HAP-1 (cell line): ENCODE measurements at regions of chr16 and their contacts with region 1.

Region 1: DNA sequence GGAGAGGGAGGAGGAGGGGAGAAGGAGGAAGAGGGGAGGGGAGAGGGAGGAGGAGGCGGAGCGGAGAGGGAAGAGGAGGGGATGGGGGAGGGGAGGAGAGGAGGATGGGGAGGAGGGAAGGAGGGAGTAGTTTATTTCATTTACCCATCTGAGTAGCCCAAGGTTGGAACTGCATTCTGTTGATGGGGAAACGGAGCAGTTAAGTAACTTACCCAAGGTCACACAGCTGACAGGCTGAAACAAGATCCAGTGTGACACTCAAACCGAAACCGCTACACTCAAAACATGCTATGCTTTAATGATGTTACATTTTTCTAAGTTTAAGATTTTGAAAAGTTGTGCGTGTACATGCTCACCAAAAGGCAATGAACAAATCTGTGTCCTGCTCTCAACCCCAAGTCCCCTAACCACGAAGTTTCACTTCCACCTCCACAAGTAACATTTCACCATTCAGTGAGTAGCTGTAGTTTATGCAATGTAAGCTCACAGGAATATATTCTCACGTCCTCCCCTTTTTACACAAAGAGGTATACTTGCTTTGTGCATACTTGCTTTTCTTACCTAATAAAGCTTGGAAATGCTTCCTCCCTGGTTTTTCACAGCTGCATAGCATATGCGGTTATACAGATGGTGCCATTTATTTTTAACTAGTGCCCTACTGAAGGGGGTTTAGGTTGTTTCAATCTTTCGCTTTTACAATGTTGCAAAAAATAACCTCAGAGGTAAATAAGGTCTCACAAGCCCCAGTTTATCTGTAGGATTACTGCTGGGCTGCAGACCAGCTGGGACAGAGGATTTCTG is 275.3 kb downstream of the PARN start:
- DNase-seq: no peak
- H3K4me3 ChIP-seq: no peak overlapping the region
- H3K4me1 ChIP-seq: no peaks in the 10 kb centered on the region
- H3K27me3 ChIP-seq: 0 out of 2 replicates have a peak, but pooled peaks cover 2% of the 10 kb centered on the region

Region 2: GRCh38 chr16:13997933-13998332 is 356.8 kb before region 1 on chr16:
- in situ Hi-C with region 1: no loop called
- DNase-seq: no peak
- H3K4me3 ChIP-seq: no peak overlapping the region
- H3K4me1 ChIP-seq: peaks cover 5% of the 10 kb centered on the region; the same call in 1 of the 2 replicates
- H3K27me3 ChIP-seq: no peaks in the 10 kb centered on the region

Region 3: DNA sequence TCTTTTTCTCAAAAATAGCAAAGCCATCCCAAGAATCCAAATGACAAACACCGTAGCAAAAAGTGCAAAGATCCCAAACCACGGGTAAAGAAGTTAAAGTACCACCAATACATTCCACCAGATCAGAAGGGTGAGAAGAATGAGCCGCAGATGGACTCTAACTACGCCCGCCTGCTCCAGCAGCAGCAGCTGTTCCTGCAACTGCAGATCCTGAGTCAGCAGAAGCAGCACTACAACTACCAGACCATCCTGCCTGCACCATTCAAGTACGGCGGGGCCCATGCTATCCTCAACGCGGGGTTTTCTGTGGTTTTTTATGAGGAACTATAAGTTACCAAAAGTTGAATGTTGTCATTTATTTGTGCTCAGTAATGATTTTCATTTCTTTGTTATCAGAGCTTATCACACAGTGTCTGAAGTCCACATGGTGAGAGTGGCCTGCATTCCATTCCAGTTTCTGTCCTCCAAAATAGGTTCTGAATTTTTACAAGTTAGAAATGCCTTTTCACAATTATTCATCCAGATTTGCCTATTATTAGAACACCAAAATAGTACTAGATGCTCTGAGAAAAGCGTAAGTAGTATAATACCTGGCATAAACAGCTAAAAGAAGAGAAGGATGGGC is 114.4 kb before region 1 on chr16:
- in situ Hi-C with region 1: no loop called
- DNase-seq: no peak
- H3K4me3 ChIP-seq: no peak overlapping the region
- H3K4me1 ChIP-seq: 0 out of 2 replicates have a peak, but pooled peaks cover 2% of the 10 kb centered on the region
- H3K27me3 ChIP-seq: no peaks in the 10 kb centered on the region

Region 4: DNA sequence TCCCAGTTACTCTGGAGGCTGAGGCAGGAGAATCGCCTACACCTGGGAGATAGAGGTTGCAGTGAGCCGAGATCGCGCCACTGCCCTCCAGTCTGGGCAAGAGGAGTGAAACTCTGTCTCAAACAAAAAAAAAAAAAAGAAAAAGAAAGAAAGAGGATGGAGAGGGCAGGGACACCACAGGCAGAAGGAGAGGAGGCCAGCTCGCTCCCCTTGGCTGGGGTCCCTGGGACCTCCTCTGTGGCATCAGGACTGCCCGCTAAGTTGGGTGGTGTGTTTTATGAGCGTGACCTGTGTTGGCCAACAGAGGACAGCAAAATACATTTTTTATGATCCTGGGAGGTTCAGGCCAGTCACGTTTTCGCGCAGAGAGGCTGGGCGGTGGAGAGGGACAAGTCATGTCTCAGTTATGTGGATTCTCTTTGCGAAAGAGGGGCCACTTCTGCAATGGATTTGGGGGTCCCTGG is 54.0 kb before region 1 on chr16:
- in situ Hi-C with region 1: no loop called
- DNase-seq: peak; percentile 81
- H3K4me3 ChIP-seq: no peak overlapping the region
- H3K4me1 ChIP-seq: peaks cover 14% of the 10 kb centered on the region
- H3K27me3 ChIP-seq: no peaks in the 10 kb centered on the region

Region 5: GRCh38 chr16:14315683-14316320 is 38.9 kb before region 1 on chr16:
- in situ Hi-C with region 1: loop called (anchors 5 kb)
- DNase-seq: no peak
- H3K4me3 ChIP-seq: no peak overlapping the region
- H3K4me1 ChIP-seq: no peaks in the 10 kb centered on the region
- H3K27me3 ChIP-seq: no peaks in the 10 kb centered on the region

Region 6: GRCh38 chr16:14418795-14419225 is 64.1 kb after region 1 on chr16:
- in situ Hi-C with region 1: loop called (anchors 10 kb)
- DNase-seq: no peak
- H3K4me3 ChIP-seq: no peak overlapping the region
- H3K4me1 ChIP-seq: no peaks in the 10 kb centered on the region
- H3K27me3 ChIP-seq: no peaks in the 10 kb centered on the region

Region 7: DNA sequence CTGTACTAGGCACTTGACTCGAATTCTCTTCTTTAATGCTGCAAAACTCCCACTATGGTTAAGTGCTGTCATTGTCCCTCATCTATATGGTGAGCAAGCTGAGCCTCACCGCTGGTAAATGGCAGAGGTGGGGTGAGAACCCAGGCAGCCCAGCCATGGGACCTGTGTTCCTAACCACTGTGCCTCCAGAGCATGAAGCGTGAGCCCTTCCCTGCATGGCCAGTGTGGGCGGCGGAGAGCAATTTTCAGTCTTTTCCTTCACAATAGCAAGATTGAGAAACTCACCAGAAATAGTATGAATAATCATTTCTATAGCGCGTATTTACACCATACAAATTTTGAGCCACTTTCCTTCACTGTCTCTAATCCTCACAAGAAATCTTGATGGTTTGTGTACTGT is 287.2 kb after region 1 on chr16:
- in situ Hi-C with region 1: no loop called
- DNase-seq: peak in 1 of 2 experiments; percentile 28
- H3K4me3 ChIP-seq: no peak overlapping the region
- H3K4me1 ChIP-seq: peaks cover 7% of the 10 kb centered on the region
- H3K27me3 ChIP-seq: no peaks in the 10 kb centered on the region